Aorta (tissue), 5 donors: ENCODE measurements at regions of chr1 and their contacts with region 1.

Region 1: DNA sequence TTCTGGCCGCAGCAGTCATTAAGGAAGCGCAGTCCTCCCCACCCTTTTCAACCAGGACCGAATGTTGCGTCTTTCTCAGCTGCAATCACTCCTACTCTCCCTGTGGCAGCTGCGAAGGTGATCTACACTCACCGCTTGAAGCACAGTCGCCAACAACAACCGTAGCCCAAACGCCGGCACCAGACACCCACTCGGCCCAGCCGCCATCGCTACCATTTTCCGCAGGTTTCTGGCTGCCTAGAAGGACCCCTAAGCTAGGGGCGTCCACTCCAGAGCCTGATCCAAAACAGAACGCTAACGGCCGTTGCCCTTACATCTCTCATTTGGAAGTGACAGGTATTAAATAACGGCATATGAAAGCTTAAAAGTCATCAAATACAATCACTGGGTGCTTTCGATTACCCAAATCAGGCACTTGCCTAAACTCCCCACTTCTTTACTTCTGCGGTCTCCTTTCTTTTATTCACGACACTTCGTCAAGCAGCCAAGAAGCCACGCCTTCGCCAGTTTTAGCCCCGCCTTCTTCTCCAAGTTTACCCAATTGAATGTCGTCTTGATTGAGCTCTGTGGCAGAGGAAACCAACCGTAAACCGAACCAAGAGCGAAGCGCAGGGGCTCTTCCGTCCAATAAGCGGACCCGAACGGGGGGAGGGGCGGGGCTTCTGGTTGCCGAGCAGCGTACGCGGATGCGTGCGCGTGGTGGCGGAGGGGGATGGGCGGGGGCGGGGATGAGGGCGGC is at the start of gene SELENOF:
- DNase-seq: peak; percentile 99 to 100
- ATAC-seq: peak; percentile 99
- H3K4me3 ChIP-seq: peak within 1 kb of the TSS; percentile 96 to 100
- H3K27ac ChIP-seq: peak within 1 kb of the TSS; percentile 41 to 61
- H3K4me1 ChIP-seq: peaks cover 1 to 5% of the 10 kb centered on the region in 2 donors
- H3K27me3 ChIP-seq: no peaks in the 10 kb centered on the region
- total RNA-seq, gene SELENOF: 145 to 169 TPM

Region 2: GRCh38 chr1:86788300-86789206 is 125.5 kb before region 1 on chr1:
- intact Hi-C with region 1: loop called in 1 of 2 experiments (anchors 5 kb)
- DNase-seq: peak in 1 of 2 donors; percentile 78
- ATAC-seq: peak; percentile 86
- H3K4me3 ChIP-seq: no peak overlapping the region
- H3K27ac ChIP-seq: peak overlapping the region; percentile 32 to 62
- H3K4me1 ChIP-seq: peaks cover 1 to 15% of the 10 kb centered on the region in 2 donors
- H3K27me3 ChIP-seq: no peaks in the 10 kb centered on the region

Region 3: GRCh38 chr1:86798608-86799291 is 115.3 kb before region 1 on chr1:
- intact Hi-C with region 1: no loop called
- DNase-seq: no peak
- ATAC-seq: no peak
- H3K4me3 ChIP-seq: no peak overlapping the region
- H3K27ac ChIP-seq: no peak overlapping the region
- H3K4me1 ChIP-seq: no peaks in the 10 kb centered on the region
- H3K27me3 ChIP-seq: no peaks in the 10 kb centered on the region

Region 4: DNA sequence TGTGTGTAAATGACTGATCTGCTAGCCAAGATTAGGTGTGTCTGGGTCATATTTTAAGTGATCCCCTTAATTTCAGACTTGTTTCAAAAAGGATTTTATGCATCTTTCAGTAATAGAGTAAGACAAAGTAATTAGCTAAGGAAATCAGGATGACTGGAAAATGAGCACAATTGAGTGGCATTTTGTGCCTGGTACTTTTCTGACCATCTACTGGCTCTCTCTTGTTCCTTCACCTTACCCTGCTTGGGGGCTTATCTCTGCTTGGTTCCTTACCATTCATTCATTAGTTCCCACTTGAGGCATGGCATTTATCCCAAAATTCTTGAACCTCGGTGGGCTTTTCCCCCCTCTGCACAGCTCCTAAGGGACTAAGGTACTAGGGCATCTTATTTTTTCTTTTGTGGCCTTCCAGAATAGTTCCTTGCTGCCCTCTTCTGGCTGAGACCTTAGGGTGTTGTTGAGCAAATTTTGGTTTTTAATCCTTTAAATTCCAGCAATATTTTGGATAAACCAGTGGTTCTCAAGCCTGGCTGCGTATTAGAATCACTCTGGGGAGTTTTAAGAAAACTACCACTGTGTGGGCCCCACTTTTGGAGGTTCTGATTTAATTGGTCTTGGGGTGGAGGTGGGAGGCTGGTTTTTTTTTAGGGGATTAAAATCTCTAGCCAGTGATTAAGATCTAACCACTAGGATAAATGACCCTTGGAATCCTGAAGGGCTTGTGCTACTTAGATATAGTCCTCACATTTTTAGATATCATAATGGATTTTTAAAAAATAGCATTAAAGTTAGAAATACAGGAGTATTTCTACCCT is 51.2 kb after region 1 on chr1:
- intact Hi-C with region 1: no loop called
- DNase-seq: no peak
- ATAC-seq: no peak
- H3K4me3 ChIP-seq: no peak overlapping the region
- H3K27ac ChIP-seq: no peak overlapping the region
- H3K4me1 ChIP-seq: no peaks in the 10 kb centered on the region
- H3K27me3 ChIP-seq: no peaks in the 10 kb centered on the region